Calu3 (cell line): ENCODE measurements at regions of chr14 and their contacts with region 1.

Region 1: DNA sequence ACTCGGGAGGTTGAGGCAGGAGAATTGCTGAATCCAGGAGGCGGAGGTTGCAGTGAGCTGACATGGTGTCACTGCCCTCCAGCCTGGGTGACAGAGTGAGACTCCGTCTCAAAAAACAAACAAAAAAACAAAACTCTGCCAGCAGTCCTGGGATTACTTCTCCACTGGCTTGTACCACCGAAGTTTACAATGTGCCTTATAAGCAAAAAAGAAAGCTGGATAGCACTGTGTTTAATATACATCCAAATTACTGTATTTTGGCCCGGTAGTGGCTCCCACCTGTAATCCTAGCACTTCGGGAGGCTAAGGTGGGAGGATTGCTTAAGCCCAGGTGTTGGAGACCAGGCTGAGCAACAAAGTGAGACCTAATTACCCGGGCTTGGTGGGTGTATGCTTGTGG is 16.7 kb downstream of the HOMEZ start:
- DNase-seq: no peak
- H3K4me3 Mint-ChIP-seq: no peak overlapping the region
- H3K27ac Mint-ChIP-seq: no peak overlapping the region
- H3K4me1 Mint-ChIP-seq: no peaks in the 10 kb centered on the region
- H3K27me3 Mint-ChIP-seq: peaks cover 29% of the 10 kb centered on the region
- CTCF ChIP-seq: no peak

Region 2: GRCh38 chr14:23299211-23299957 is 30.2 kb after region 1 on chr14:
- CTCF ChIA-PET with region 1: interaction called, 5 read pairs
- intact Hi-C with region 1: loop called (anchors 1 kb)
- DNase-seq: peak; percentile 49
- H3K4me3 Mint-ChIP-seq: peak overlapping the region; percentile 89
- H3K27ac Mint-ChIP-seq: peak overlapping the region; percentile 31
- H3K4me1 Mint-ChIP-seq: peaks cover 25% of the 10 kb centered on the region
- H3K27me3 Mint-ChIP-seq: no peaks in the 10 kb centered on the region
- CTCF ChIP-seq: no peak

Region 3: DNA sequence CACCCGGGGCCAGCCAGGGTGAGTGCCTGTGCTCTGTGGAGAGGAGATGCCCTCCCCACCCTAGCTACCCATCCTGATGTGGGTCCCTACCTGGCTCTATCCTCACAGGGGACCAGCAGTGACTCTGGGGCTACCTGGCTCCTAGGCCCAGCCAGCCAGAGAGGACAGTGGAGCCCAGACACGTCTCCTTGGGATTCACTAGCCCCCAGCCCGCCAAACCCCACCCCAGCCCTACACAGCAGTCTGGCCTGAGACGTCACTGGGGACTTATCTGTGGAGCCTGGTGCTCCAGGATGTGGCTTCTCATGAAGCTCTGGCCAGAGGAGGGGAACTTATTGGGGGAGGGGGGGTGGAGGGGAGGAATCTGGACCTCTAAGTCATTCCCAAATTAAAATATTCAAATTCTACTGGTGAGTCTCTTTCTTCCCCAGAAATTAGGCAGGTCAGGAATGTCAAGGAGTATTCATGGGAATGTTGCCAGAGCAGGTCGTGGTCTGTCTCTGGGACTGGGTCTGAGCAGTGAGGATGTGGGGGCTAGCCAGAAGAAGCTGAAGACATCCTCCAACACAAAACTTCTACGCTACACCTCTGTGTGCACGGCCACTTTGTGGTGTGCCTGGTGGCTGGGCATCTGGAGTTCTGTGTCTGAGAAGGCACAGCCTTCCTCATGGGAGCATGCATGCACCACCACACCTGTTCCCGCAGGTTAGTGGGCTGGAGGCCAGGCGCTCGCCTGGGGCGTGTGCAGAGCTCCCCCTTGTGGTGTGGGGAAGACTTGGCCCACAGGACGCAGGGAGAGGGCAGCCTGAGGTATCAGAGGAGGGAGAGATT is 110.4 kb after region 1 on chr14:
- CTCF ChIA-PET with region 1: interaction called, 4 read pairs
- intact Hi-C with region 1: loop called (anchors 1 kb)
- DNase-seq: peak; percentile 78
- H3K4me3 Mint-ChIP-seq: no peak overlapping the region
- H3K27ac Mint-ChIP-seq: no peak overlapping the region
- H3K4me1 Mint-ChIP-seq: no peaks in the 10 kb centered on the region
- H3K27me3 Mint-ChIP-seq: peaks cover 98% of the 10 kb centered on the region
- CTCF ChIP-seq: peak; percentile 83